ENCODE measurements at regions of chr14 and their contacts with region 1.

Region 1: DNA sequence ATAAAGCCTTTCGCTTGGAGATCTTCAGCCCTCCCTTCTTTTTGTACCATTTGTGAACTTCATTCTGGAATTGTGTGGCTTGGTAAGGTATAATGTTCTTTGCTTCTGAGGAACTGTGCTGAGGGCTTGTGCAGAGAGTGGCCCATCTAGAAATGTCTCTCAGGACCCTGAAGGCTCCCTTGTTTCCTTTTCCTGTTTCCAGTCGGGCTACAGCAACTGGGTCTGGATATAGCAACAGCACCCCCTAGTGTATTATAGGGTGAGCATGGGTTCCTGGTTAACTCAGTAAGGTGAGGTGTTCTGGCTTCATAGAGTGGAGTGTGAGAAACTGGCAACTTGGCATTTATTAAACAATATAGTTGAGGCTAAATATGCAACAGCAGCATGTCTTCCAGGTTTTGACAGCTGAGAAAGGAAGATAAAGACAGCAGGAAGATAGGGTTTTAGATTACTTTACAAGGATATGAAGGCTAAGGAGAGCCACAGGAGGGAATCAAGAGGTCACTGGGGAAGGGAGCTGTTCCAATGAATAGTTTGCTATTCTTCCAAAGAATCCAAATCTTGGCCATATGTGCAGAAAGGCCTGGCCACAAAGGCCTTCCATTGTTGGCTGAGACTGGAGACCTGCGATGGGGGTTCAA is 49.1 kb upstream of the RNU6-8 start:
- DNase-seq: peak in 8 of 9 donors; percentile 27 to 77 (median 69)
- ATAC-seq: peak; percentile 93
- H3K4me3 ChIP-seq: no peak overlapping the region
- H3K4me3 Mint-ChIP-seq: no peak overlapping the region
- H3K27ac ChIP-seq: no peak overlapping the region
- H3K27ac Mint-ChIP-seq: no peak overlapping the region
- H3K4me1 ChIP-seq: no peaks in the 10 kb centered on the region
- H3K4me1 Mint-ChIP-seq: no peaks in the 10 kb centered on the region
- H3K27me3 ChIP-seq: no peaks in the 10 kb centered on the region
- H3K27me3 Mint-ChIP-seq: no peaks in the 10 kb centered on the region

Region 2: GRCh38 chr14:31510222-31510621 is 741.9 kb before region 1 on chr14:
- CTCF ChIA-PET with region 1: interaction called, 23 read pairs
- POLR2A ChIA-PET with region 1: no interaction called
- intact Hi-C with region 1: loop called (anchors 1 kb)
- DNase-seq: peak in 5 of 9 donors; percentile 7 to 19 (median 12)
- ATAC-seq: no peak
- H3K4me3 ChIP-seq: no peak overlapping the region
- H3K4me3 Mint-ChIP-seq: no peak overlapping the region
- H3K27ac ChIP-seq: no peak overlapping the region
- H3K27ac Mint-ChIP-seq: no peak overlapping the region
- H3K4me1 ChIP-seq: no peaks in the 10 kb centered on the region
- H3K4me1 Mint-ChIP-seq: no peaks in the 10 kb centered on the region
- H3K27me3 ChIP-seq: no peaks in the 10 kb centered on the region
- H3K27me3 Mint-ChIP-seq: peaks cover 0 to 4% (median 0%) of the 10 kb centered on the region in 5 donors

Region 3: DNA sequence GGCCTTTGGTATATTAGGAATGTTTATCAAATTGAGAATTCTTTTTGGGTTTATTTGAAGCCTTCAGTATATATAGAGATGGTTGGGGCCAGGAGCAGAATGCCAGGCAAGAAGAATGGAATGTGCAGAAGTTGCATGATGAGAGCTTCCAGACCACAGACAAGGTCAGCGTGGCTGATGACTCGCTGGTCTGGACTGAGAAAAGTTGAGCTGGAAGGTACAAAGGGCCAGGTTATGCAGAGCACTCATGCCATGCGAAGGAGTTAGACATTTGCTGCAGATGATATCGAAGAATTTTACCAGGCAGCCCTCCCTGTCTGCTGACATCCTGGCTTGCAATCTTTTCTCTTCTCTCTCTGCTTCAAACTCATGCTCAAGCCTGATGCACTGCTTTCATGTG is 371.2 kb before region 1 on chr14:
- CTCF ChIA-PET with region 1: no interaction called
- POLR2A ChIA-PET with region 1: no interaction called
- intact Hi-C with region 1: no loop called
- DNase-seq: no peak
- ATAC-seq: no peak
- H3K4me3 ChIP-seq: no peak overlapping the region
- H3K4me3 Mint-ChIP-seq: no peak overlapping the region
- H3K27ac ChIP-seq: no peak overlapping the region
- H3K27ac Mint-ChIP-seq: peak overlapping the region in 1 of 9 donors; percentile 55
- H3K4me1 ChIP-seq: no peaks in the 10 kb centered on the region
- H3K4me1 Mint-ChIP-seq: peaks cover 0 to 5% (median 0%) of the 10 kb centered on the region in 7 donors
- H3K27me3 ChIP-seq: no peaks in the 10 kb centered on the region
- H3K27me3 Mint-ChIP-seq: peaks cover 0 to 11% (median 4%) of the 10 kb centered on the region in 5 donors

Region 4: GRCh38 chr14:31926123-31926522 is 326.0 kb before region 1 on chr14:
- CTCF ChIA-PET with region 1: interaction called, 87 read pairs
- POLR2A ChIA-PET with region 1: interaction called, 3 read pairs
- intact Hi-C with region 1: loop called (anchors 1 kb)
- DNase-seq: peak in 7 of 9 donors; percentile 20 to 54 (median 44)
- ATAC-seq: peak; percentile 67
- H3K4me3 ChIP-seq: no peak overlapping the region
- H3K4me3 Mint-ChIP-seq: no peak overlapping the region
- H3K27ac ChIP-seq: no peak overlapping the region
- H3K27ac Mint-ChIP-seq: no peak overlapping the region
- H3K4me1 ChIP-seq: no peaks in the 10 kb centered on the region
- H3K4me1 Mint-ChIP-seq: peaks cover 7 to 18% (median 11%) of the 10 kb centered on the region in 7 donors
- H3K27me3 ChIP-seq: no peaks in the 10 kb centered on the region
- H3K27me3 Mint-ChIP-seq: no peaks in the 10 kb centered on the region

Region 5: GRCh38 chr14:32150392-32150791 is 101.8 kb before region 1 on chr14:
- CTCF ChIA-PET with region 1: no interaction called
- POLR2A ChIA-PET with region 1: no interaction called
- intact Hi-C with region 1: loop called in 1 of 2 experiments (anchors 5 kb)
- DNase-seq: no peak
- ATAC-seq: no peak
- H3K4me3 ChIP-seq: no peak overlapping the region
- H3K4me3 Mint-ChIP-seq: no peak overlapping the region
- H3K27ac ChIP-seq: no peak overlapping the region
- H3K27ac Mint-ChIP-seq: peak overlapping the region in 2 of 9 donors; percentile 46 to 56
- H3K4me1 ChIP-seq: no peaks in the 10 kb centered on the region
- H3K4me1 Mint-ChIP-seq: no peaks in the 10 kb centered on the region
- H3K27me3 ChIP-seq: no peaks in the 10 kb centered on the region
- H3K27me3 Mint-ChIP-seq: no peaks in the 10 kb centered on the region

Region 6: GRCh38 chr14:32350020-32350419 is 97.9 kb after region 1 on chr14:
- CTCF ChIA-PET with region 1: no interaction called
- POLR2A ChIA-PET with region 1: no interaction called
- intact Hi-C with region 1: no loop called
- DNase-seq: no peak
- ATAC-seq: no peak
- H3K4me3 ChIP-seq: no peak overlapping the region
- H3K4me3 Mint-ChIP-seq: no peak overlapping the region
- H3K27ac ChIP-seq: no peak overlapping the region
- H3K27ac Mint-ChIP-seq: no peak overlapping the region
- H3K4me1 ChIP-seq: no peaks in the 10 kb centered on the region
- H3K4me1 Mint-ChIP-seq: no peaks in the 10 kb centered on the region
- H3K27me3 ChIP-seq: no peaks in the 10 kb centered on the region
- H3K27me3 Mint-ChIP-seq: no peaks in the 10 kb centered on the region

Region 7: GRCh38 chr14:32560209-32560857 is 308.2 kb after region 1 on chr14:
- CTCF ChIA-PET with region 1: no interaction called
- POLR2A ChIA-PET with region 1: no interaction called
- intact Hi-C with region 1: loop called in 1 of 2 experiments (anchors 5 kb)
- DNase-seq: peak in 4 of 9 donors; percentile 7 to 28 (median 10)
- ATAC-seq: peak; percentile 55
- H3K4me3 ChIP-seq: no peak overlapping the region
- H3K4me3 Mint-ChIP-seq: no peak overlapping the region
- H3K27ac ChIP-seq: no peak overlapping the region
- H3K27ac Mint-ChIP-seq: no peak overlapping the region
- H3K4me1 ChIP-seq: no peaks in the 10 kb centered on the region
- H3K4me1 Mint-ChIP-seq: peaks cover 12 to 20% (median 15%) of the 10 kb centered on the region in 7 donors
- H3K27me3 ChIP-seq: no peaks in the 10 kb centered on the region
- H3K27me3 Mint-ChIP-seq: no peaks in the 10 kb centered on the region

Measured in naive thymus-derived CD4-positive, alpha-beta T cell (primary cell).